Aorta (tissue), 5 donors: ENCODE measurements at regions of chr18 and their contacts with region 1.

Region 1: GRCh38 chr18:47930931-47931717 is 665 bp upstream of the SMAD2 start:
- DNase-seq: peak; percentile 98 to 99
- ATAC-seq: peak; percentile 96
- H3K4me3 ChIP-seq: peak overlapping the region; percentile 84 to 92
- H3K27ac ChIP-seq: peak overlapping the region; percentile 78 to 92
- H3K4me1 ChIP-seq: peaks cover 0 to 3% of the 10 kb centered on the region in 2 donors
- H3K27me3 ChIP-seq: no peaks in the 10 kb centered on the region

Region 2: GRCh38 chr18:47870605-47871004 is 60.5 kb before region 1 on chr18:
- intact Hi-C with region 1: loop called in 1 of 2 experiments (anchors 10 kb)
- DNase-seq: no peak
- ATAC-seq: no peak
- H3K4me3 ChIP-seq: no peak overlapping the region
- H3K27ac ChIP-seq: no peak overlapping the region
- H3K4me1 ChIP-seq: no peaks in the 10 kb centered on the region
- H3K27me3 ChIP-seq: no peaks in the 10 kb centered on the region

Region 3: GRCh38 chr18:47968006-47968676 is 37.0 kb after region 1 on chr18:
- intact Hi-C with region 1: loop called in 1 of 2 experiments (anchors 5 kb)
- DNase-seq: no peak
- ATAC-seq: no peak
- H3K4me3 ChIP-seq: no peak overlapping the region
- H3K27ac ChIP-seq: peak overlapping the region; percentile 42 to 88
- H3K4me1 ChIP-seq: no peaks in the 10 kb centered on the region
- H3K27me3 ChIP-seq: no peaks in the 10 kb centered on the region

Region 4: GRCh38 chr18:48002933-48003365 is 71.8 kb after region 1 on chr18:
- intact Hi-C with region 1: loop called (anchors 1 to 2 kb)
- DNase-seq: peak; percentile 85 to 90
- ATAC-seq: peak; percentile 80
- H3K4me3 ChIP-seq: no peak overlapping the region
- H3K27ac ChIP-seq: peak overlapping the region in 1 of 2 donors; percentile 53
- H3K4me1 ChIP-seq: no peaks in the 10 kb centered on the region
- H3K27me3 ChIP-seq: no peaks in the 10 kb centered on the region

Region 5: GRCh38 chr18:48007955-48008701 is 77.0 kb after region 1 on chr18:
- intact Hi-C with region 1: loop called (anchors 1 to 2 kb)
- DNase-seq: peak; percentile 74 to 90
- ATAC-seq: peak; percentile 90
- H3K4me3 ChIP-seq: peak overlapping the region; percentile 47 to 70
- H3K27ac ChIP-seq: no peak overlapping the region
- H3K4me1 ChIP-seq: no peaks in the 10 kb centered on the region
- H3K27me3 ChIP-seq: no peaks in the 10 kb centered on the region

Region 6: DNA sequence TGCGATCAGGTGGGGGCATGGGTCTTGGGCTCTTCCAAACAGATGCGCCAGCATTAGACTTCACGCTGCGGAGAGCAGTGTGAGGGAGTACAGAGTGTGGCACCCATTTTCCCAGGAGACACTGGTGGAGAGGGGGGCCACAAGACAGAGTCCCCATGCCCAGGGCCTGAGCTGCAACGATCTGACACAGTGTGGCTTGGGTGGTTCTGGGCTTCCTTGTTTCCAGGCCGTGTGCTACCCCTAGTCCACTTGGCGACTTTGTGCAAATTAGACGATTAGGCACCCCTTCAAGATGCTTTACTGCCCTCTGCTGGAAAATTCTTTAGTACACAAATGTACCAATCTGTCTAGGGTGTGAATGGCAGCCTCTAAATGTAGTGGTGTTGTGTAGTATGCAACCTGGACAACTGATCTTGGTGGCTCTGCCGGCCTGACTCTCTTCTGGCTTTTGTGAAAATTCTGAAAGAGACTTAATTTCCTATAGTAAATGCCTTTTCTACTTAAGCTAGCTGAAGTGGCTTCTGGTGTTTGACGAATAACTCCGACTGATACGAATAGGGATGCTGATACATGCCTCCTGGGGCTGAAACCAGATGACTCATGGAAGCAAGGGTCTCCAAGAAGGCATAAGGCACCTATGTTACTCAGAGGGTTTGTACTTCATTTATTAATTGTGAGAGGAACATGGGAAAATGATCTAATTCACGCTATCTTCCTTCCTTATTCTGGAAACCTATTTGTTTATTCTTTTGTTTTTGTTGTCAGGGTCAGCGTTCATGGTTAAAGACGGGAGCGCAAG is 91.6 kb after region 1 on chr18:
- intact Hi-C with region 1: loop called in 1 of 2 experiments (anchors 5 kb)
- DNase-seq: peak in 1 of 2 donors; percentile 57
- ATAC-seq: peak; percentile 62
- H3K4me3 ChIP-seq: no peak overlapping the region
- H3K27ac ChIP-seq: no peak overlapping the region
- H3K4me1 ChIP-seq: no peaks in the 10 kb centered on the region
- H3K27me3 ChIP-seq: no peaks in the 10 kb centered on the region